Left colon (tissue), 2 donors: ENCODE measurements at regions of chr6 and their contacts with region 1.

Region 1: DNA sequence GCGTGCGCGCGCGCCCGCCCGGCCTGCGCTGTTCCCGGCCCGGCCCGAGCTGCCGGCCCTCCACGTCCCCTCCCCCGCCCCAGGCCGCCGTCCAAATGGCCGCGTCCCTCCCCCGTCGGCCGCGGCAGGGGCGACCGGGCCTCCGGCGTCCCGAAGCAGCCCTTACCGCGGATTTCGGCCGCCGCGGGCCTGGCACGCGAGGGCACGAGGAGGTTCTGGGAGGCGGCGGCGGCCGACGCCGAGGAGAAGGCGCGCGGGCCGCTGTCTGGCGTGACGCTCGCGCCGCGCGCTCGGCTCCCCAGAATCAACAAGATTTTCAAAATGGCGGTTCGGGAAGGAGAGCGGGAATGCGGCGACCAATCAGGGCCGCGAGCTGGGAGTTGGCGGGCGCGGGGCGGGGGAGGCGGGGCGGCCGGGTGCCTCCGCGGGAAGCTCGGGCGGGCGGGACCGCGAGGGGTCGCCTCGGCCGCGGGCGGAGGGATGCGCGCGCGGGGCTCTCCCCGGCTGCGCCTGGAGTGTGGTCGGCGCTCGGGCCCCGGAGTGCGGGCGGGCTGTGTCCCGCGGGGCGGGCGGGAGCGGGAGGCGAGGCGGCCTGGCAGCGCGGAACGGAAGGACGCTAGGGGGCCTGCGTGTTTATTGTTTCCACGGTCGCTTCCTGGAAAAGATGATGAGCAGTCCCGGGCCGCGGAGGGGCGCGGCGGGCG is at the start of gene DEK:
- DNase-seq: peak; percentile 84 to 92
- ATAC-seq: peak; percentile 79
- total RNA-seq, gene DEK: 73.7 to 75.7 TPM

Region 2: DNA sequence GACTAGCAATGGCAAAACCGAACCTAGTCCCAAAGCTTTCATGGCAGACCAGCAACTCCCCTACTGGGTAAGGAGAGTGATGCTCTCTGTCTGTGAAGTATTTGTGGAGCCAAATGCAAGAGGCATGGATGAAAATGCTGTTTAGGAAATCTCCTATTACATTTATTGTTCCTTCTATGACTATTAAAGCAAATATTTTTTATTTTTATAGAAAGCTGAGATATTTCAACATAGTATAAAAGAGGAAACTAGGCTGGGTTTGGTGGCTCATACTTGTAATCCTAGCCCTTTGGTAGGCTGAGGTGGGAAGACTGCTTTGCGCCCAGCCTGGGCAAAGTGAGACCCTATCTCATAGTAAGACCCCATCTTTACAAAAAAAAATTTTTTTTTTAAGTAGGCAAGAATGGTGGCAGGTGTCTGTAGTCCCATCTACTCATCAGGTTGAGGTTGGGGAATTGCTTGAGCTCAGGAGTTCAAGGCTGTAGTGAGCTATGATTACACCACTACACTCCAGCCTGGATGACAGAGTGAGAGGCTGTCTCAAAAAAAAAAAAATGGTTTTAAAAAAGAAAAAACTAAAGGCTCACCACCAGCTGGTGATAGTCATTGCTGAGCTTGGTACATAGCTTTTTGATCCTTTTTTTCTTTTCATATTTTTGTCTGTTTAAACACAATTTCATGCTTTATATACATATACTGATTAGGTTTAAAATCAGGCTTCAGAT is 97.9 kb before region 1 on chr6:
- intact Hi-C with region 1: loop called in 1 of 2 experiments (anchors 10 kb)
- DNase-seq: no peak
- ATAC-seq: no peak